Heart left ventricle (tissue), 16 donors: ENCODE measurements at regions of chr19 and their contacts with region 1.

Region 1: DNA sequence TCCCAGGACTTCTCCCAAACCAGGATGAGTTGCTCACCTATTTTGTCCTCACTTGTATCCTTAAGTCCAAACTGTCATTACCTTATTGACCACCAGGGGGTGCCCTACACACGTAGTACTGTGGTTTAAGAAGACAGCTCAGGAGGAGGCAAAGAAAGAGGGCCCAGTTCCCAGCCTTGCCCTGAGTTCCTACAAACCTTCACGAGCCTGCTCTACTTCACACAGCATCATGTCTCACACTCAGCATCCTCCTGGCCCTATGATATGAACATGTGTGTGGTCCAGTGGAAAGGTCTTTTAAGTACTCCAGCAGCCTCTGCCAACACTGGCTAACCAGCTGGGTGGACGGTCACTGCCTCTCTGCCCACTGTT is 8.1 kb upstream of the ZNF784 start:
- DNase-seq: peak; percentile 42 to 86 (median 83)
- ATAC-seq: peak; percentile 16 to 62 (median 58)
- H3K4me3 ChIP-seq: no peak overlapping the region
- H3K27ac ChIP-seq: peak overlapping the region in 1 of 12 donors; percentile 67
- H3K4me1 ChIP-seq: peaks cover 6 to 40% (median 22%) of the 10 kb centered on the region in 12 donors
- H3K27me3 ChIP-seq: no peaks in the 10 kb centered on the region
- CTCF ChIP-seq: peak; percentile 78 to 97 (median 86)
- POLR2A ChIP-seq: no peak

Region 2: DNA sequence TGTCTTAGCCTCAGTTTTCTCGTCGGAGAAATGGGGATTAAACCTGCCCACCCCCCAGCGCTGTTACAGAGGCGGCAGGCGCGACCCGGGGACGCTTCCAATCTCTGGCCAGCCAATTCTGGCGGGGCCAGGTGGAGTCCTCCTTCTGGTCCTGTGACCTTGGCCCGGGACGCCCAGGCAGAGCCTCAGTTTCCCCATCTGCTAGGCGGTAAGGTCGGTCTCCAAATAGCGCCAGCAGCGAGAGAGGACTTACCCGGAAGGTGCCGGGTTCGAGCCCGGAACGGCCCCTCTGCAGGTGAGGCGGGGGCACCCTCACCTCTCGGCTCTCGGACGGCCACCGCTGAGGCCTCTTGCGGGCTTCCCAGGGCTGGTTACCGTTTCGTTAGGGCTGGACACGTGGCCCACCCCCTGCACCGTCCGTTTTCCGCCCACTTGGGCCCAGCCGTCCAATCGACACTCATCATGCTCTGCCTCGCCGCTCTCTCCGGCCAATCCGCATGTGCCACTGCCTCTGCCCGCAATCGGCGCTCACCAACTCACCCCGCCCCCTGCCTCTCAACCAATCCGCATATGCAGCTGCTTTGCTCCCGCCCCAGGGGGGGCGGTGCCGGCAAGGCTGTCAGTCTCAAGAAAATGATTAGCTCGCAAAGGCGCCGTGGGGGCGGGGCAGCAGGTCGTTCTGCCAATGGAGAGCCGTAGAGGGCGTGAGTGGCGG is 171.0 kb before region 1 on chr19 and contains the start of gene ISOC2:
- intact Hi-C with region 1: loop called in 4 of 10 experiments (anchors 2 to 5 kb)
- DNase-seq: peak; percentile 100
- ATAC-seq: peak; percentile 94 to 96 (median 96)
- H3K4me3 ChIP-seq: peak within 1 kb of the TSS; percentile 47 to 94 (median 82)
- H3K27ac ChIP-seq: peak within 1 kb of the TSS; percentile 63 to 97 (median 92)
- H3K4me1 ChIP-seq: peaks cover 0 to 24% (median 9%) of the 10 kb centered on the region in 12 donors
- H3K27me3 ChIP-seq: no peaks in the 10 kb centered on the region
- CTCF ChIP-seq: no peak
- POLR2A ChIP-seq: peak in 1 of 2 donors; percentile 27
- total RNA-seq, gene ISOC2: 36.9 to 102 (median 48.8) TPM

Region 3: DNA sequence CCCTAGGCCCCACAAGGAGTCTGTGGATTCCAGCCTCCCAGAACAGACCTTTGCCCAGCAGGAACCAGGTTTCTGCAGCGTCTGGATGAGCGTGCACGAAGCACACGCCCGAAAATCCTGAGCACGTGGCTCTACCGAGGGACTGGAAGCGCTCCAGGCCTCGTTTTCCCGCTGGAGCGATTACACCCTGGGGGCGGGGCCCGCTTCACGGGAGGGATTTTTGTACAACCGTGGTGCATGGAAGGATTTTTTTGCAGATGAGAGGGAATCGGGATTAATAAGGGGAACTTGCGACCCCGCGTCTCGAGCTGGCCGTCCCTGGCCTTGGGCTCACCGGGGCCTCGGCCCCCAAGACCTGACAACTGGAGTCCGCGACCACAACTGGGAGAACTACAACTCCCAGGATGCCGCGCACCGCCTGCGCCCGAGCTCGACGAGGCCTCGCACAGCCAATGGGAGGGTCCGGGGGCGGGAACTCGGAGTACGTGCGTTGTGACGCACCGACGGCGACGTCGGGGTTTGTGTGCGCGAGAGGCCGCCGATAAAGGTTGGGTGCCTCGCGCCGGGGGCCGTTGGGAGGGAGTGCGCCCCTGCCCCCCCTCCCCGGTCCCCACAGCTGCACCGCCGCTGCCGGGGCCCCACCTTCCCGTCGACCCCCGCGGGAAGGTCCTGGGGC is 156.2 kb before region 1 on chr19 and contains the start of gene ZNF628:
- intact Hi-C with region 1: loop called in 2 of 10 experiments (anchors 5 kb)
- DNase-seq: peak; percentile 99 to 100 (median 99)
- ATAC-seq: peak; percentile 95 to 98 (median 98)
- H3K4me3 ChIP-seq: peak within 1 kb of the TSS; percentile 34 to 81 (median 68)
- H3K27ac ChIP-seq: peak within 1 kb of the TSS; percentile 79 to 99 (median 94)
- H3K4me1 ChIP-seq: peaks cover 0 to 31% (median 19%) of the 10 kb centered on the region in 12 donors
- H3K27me3 ChIP-seq: no peaks in the 10 kb centered on the region
- CTCF ChIP-seq: no peak
- POLR2A ChIP-seq: peak; percentile 40 to 63
- total RNA-seq, gene ZNF628: 2.3 to 10.3 (median 4.6) TPM

Region 4: DNA sequence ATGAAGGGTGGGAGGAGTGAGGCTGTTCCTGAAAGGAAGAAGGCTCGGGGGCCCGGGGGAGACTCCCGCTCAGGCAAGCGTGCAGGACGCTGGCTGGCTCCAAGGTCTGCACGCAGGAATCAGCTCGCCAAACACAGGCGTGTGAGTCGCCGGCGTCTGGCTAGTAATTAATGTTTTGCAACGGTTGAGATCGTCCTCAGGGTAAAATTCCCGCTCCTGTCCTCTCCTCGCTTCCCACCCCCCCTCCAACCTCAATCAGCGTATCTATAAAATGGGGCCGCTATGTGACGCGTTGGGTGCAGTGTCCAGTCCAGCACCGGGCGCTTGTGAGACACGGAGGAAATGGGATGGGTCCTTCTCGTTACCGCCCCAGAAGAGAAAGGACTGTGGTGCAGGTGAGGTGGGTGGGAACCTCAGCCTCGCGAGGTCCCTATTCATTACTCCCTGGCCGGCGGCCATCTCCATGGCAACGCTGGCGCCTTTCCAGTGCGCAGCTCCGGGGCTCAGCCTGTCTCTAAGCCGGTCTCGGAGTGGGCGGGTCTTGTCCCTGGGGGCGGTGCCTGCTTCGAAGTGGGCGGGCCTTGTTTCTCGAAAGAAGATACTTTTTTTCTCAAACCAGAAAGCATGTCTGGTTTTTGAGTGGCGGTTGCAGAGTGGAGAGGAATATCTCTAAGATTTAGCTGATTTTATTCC is 45.3 kb before region 1 on chr19:
- intact Hi-C with region 1: loop called in 2 of 10 experiments (anchors 5 kb)
- DNase-seq: peak; percentile 94 to 97 (median 95)
- ATAC-seq: peak; percentile 83 to 94 (median 88)
- H3K4me3 ChIP-seq: peak overlapping the region in 10 of 12 donors; percentile 20 to 49 (median 42)
- H3K27ac ChIP-seq: peak overlapping the region in 6 of 12 donors; percentile 9 to 82 (median 24)
- H3K4me1 ChIP-seq: peaks cover 0 to 27% (median 19%) of the 10 kb centered on the region in 12 donors
- H3K27me3 ChIP-seq: peaks cover 0 to 10% (median 0%) of the 10 kb centered on the region in 9 donors
- CTCF ChIP-seq: no peak
- POLR2A ChIP-seq: no peak

Region 5: DNA sequence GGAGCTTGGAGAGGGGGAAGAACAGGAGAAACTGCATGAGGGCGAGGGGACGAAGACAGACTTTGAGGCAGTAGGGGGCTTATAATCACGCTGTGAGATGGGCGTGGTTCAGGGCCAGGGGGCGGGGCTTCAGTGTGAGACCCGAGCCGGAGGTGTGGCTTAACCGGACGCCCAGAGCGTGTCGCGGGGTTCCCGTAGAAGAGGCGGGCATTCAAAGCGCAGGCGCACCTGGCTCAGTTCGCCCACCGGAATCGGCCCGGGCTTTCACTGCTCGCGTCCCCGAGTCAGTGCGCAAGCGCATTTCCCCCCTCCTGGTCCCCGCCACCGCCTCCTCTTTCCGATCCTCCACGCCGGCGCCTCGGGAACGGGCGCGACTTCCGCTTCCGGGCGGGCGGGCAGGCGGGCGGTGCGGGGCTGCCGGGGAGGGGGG is 27.2 kb before region 1 on chr19:
- intact Hi-C with region 1: loop called in 1 of 10 experiments (anchors 2 kb)
- DNase-seq: peak; percentile 98 to 99 (median 99)
- ATAC-seq: peak; percentile 84 to 92 (median 86)
- H3K4me3 ChIP-seq: peak overlapping the region; percentile 72 to 96 (median 83)
- H3K27ac ChIP-seq: peak overlapping the region; percentile 90 to 98 (median 96)
- H3K4me1 ChIP-seq: peaks cover 4 to 46% (median 31%) of the 10 kb centered on the region in 12 donors
- H3K27me3 ChIP-seq: no peaks in the 10 kb centered on the region
- CTCF ChIP-seq: no peak
- POLR2A ChIP-seq: peak in 1 of 2 donors; percentile 53

Region 6: GRCh38 chr19:55688422-55689246 is 56.2 kb after region 1 on chr19:
- intact Hi-C with region 1: no loop called
- DNase-seq: peak in 2 of 5 donors; percentile 21 to 29
- ATAC-seq: peak in 1 of 4 donors; percentile 5
- H3K4me3 ChIP-seq: no peak overlapping the region
- H3K27ac ChIP-seq: no peak overlapping the region
- H3K4me1 ChIP-seq: peaks cover 0 to 24% (median 0%) of the 10 kb centered on the region in 12 donors
- H3K27me3 ChIP-seq: no peaks in the 10 kb centered on the region
- CTCF ChIP-seq: no peak
- POLR2A ChIP-seq: no peak

Region 7: DNA sequence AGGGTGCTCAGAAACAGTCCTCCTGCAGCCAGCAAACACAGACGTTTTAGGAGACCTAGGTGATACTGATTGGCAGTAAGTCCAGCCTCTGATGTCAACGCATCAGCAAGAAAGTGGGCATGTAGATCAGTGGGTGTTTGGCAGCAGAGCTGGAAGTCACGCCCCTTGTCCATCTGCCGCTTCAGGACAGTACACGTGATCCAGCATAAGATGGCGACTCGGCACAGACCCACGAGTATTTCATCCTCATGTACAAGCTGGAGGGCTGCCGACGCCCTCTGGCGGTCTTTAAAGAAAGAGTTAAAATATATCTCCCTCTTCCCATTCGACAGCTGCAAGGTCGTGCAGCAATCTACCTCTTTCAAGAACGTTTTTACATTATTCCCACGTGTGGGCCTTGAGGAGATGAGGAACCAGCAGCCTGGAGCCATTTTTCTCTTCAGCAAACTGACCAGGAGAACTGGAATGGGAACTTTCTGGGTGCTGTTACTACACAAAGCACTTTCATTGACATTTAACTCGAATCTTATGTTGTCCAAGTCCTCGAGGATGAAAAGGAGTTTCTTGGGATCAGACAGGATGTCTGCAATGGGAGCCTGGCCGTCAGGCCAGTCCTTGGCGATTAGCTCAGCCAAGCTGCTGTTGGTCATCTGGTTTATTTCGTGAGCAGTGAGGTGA is 177.1 kb after region 1 on chr19:
- intact Hi-C with region 1: loop called in 3 of 10 experiments (anchors 5 kb)
- DNase-seq: peak in 3 of 5 donors; percentile 12 to 44 (median 37)
- ATAC-seq: peak in 2 of 4 donors; percentile 26 to 53
- H3K4me3 ChIP-seq: no peak overlapping the region
- H3K27ac ChIP-seq: no peak overlapping the region
- H3K4me1 ChIP-seq: no peaks in the 10 kb centered on the region
- H3K27me3 ChIP-seq: peaks cover 0 to 13% (median 0%) of the 10 kb centered on the region in 9 donors
- CTCF ChIP-seq: peak in 6 of 12 donors; percentile 9 to 35 (median 30)
- POLR2A ChIP-seq: no peak